Caco-2 (cell line): ENCODE measurements at regions of chr4 and their contacts with region 1.

Region 1: GRCh38 chr4:126479709-126480108 is 1153.0 kb upstream of the INTU start:
- DNase-seq: no peak
- H3K4me3 ChIP-seq: no peak overlapping the region
- H3K4me3 Mint-ChIP-seq: no peak overlapping the region
- H3K27ac Mint-ChIP-seq: no peak overlapping the region
- H3K4me1 ChIP-seq: no peaks in the 10 kb centered on the region
- H3K4me1 Mint-ChIP-seq: no peaks in the 10 kb centered on the region
- H3K27me3 ChIP-seq: no peaks in the 10 kb centered on the region
- H3K27me3 Mint-ChIP-seq: peaks cover 2% of the 10 kb centered on the region
- CTCF ChIP-seq: no peak

Region 2: DNA sequence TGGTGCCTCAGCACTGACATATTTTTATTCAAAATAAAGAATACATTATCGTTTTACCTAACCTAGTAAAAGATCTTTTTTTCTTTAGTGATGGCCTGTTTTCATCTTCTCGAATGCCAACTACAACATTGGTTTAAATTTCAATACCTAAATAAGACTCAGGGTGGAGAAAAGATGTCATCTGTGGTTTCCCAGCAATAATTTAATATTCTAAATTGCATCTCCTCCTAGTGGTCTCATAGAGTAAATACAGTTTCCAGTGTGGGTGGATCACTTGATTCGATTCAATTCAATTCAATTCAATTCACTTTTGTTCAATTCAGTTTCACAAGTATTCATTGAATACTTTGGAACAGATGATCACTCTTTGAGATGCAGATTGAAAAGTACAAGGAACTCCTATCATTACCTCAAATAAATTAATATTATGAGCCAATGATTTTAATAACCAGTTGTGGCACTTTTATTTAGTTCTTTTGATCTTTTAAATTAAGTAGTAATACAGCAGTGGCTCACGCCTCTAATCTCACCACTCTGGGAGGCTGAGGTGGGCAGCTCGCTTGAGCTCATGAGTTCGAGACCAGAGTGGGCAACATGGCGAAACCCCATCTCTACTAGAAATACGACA is 737.8 kb before region 1 on chr4:
- CTCF ChIA-PET with region 1: no interaction called
- POLR2A ChIA-PET with region 1: no interaction called
- intact Hi-C with region 1: no loop called
- DNase-seq: no peak
- H3K4me3 ChIP-seq: no peak overlapping the region
- H3K4me3 Mint-ChIP-seq: no peak overlapping the region
- H3K27ac Mint-ChIP-seq: no peak overlapping the region
- H3K4me1 ChIP-seq: no peaks in the 10 kb centered on the region
- H3K4me1 Mint-ChIP-seq: no peaks in the 10 kb centered on the region
- H3K27me3 ChIP-seq: no peaks in the 10 kb centered on the region
- H3K27me3 Mint-ChIP-seq: no peaks in the 10 kb centered on the region
- CTCF ChIP-seq: peak; percentile 10 to 41

Region 3: DNA sequence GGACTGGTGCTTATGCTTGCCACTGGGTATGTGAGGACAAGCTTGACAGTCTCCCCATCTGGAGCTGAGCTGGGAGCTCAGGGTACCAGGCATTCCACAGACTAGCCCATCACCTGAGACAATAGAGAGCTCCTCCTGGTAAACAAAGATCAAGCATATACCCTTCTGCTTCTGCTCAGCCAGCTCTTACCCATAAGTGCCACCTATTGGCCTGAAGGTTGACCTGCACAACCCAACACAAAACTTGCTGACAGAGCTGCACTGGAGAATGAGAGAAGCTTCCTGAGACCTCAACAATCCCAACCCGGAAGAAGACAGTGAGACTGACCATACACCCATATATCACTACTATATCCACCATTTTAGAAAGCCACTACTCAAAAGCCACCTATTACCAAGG is 103.8 kb after region 1 on chr4:
- CTCF ChIA-PET with region 1: no interaction called
- POLR2A ChIA-PET with region 1: no interaction called
- intact Hi-C with region 1: loop called (anchors 10 kb)
- DNase-seq: peak in 1 of 2 experiments; percentile 16
- H3K4me3 ChIP-seq: no peak overlapping the region
- H3K4me3 Mint-ChIP-seq: no peak overlapping the region
- H3K27ac Mint-ChIP-seq: no peak overlapping the region
- H3K4me1 ChIP-seq: no peaks in the 10 kb centered on the region
- H3K4me1 Mint-ChIP-seq: no peaks in the 10 kb centered on the region
- H3K27me3 ChIP-seq: no peaks in the 10 kb centered on the region
- H3K27me3 Mint-ChIP-seq: peaks cover 3% of the 10 kb centered on the region
- CTCF ChIP-seq: no peak

Region 4: GRCh38 chr4:126705266-126705665 is 225.6 kb after region 1 on chr4:
- CTCF ChIA-PET with region 1: no interaction called
- POLR2A ChIA-PET with region 1: no interaction called
- intact Hi-C with region 1: no loop called
- DNase-seq: no peak
- H3K4me3 ChIP-seq: no peak overlapping the region
- H3K4me3 Mint-ChIP-seq: no peak overlapping the region
- H3K27ac Mint-ChIP-seq: no peak overlapping the region
- H3K4me1 ChIP-seq: no peaks in the 10 kb centered on the region
- H3K4me1 Mint-ChIP-seq: no peaks in the 10 kb centered on the region
- H3K27me3 ChIP-seq: no peaks in the 10 kb centered on the region
- H3K27me3 Mint-ChIP-seq: no peaks in the 10 kb centered on the region
- CTCF ChIP-seq: no peak

Region 5: DNA sequence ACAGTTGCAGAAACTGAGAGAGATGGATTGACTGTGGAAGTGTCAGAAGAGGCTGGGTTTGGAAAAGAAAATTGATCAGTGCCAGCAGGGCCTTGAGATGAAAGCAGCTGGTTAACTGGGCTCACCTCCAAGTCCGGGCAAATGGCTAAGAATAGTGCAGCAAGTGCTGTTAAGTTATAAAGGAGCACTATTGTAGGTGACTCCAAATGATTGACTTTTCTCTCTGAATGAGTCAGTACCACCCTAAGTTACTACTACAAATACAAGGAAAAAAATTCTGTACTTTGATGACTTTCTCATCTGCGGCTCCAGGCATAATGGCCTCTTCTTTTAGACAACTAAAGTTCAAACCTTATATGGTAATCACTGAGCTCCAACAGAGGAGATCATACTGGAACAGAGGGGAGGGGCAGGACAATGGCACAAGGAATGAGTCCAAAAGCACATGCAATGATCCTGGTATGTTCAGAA is 419.7 kb after region 1 on chr4:
- CTCF ChIA-PET with region 1: no interaction called
- POLR2A ChIA-PET with region 1: no interaction called
- intact Hi-C with region 1: no loop called
- DNase-seq: no peak
- H3K4me3 ChIP-seq: no peak overlapping the region
- H3K4me3 Mint-ChIP-seq: no peak overlapping the region
- H3K27ac Mint-ChIP-seq: no peak overlapping the region
- H3K4me1 ChIP-seq: no peaks in the 10 kb centered on the region
- H3K4me1 Mint-ChIP-seq: no peaks in the 10 kb centered on the region
- H3K27me3 ChIP-seq: no peaks in the 10 kb centered on the region
- H3K27me3 Mint-ChIP-seq: no peaks in the 10 kb centered on the region
- CTCF ChIP-seq: no peak

Region 6: DNA sequence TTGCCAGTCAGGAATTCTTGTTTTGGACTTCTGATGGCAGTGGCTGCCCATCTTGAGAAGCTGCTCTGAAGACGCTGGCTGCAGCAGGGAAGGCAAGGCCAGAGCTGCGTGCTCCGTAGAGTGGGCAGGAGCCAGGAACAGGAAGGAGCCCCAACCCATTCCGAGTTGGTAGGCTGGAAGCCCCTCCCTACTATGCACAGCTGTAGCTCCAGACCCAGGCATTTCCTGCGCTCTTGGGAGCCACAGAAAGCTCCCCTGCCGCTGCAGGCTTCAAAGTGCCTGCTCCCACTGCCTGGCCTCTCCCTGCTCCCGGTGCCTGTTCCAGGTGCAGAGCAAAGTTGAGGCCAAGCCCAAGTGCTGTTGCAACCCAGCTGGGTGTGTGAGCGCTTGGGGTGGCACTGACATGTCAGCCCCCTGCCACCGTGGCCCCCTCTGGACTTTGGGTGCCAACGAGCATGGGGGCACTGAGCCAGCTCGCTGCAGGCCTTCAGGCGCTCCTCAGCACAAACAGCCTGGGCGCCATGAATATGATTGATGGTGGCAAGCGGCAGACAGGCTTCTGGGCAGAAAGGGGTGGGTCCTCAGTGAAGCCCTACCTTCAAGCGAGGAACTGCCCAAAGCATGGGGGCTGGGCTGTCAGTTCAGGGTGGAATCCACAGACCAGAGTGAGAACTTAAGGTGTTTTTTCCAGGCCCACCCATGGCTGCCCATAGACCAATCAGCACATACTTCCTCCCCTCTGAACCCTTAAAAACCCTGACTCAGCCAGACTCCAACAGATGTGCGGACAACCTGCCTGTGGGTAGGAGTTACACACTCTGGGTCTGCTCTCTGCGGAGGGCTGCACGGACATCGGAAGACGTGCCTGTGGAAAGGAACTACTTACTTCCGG is 475.8 kb after region 1 on chr4:
- CTCF ChIA-PET with region 1: no interaction called
- POLR2A ChIA-PET with region 1: no interaction called
- intact Hi-C with region 1: no loop called
- DNase-seq: peak in 1 of 2 experiments; percentile 18
- H3K4me3 ChIP-seq: no peak overlapping the region
- H3K4me3 Mint-ChIP-seq: no peak overlapping the region
- H3K27ac Mint-ChIP-seq: no peak overlapping the region
- H3K4me1 ChIP-seq: no peaks in the 10 kb centered on the region
- H3K4me1 Mint-ChIP-seq: no peaks in the 10 kb centered on the region
- H3K27me3 ChIP-seq: no peaks in the 10 kb centered on the region
- H3K27me3 Mint-ChIP-seq: no peaks in the 10 kb centered on the region
- CTCF ChIP-seq: no peak